Transverse colon (tissue), 4 donors: ENCODE measurements at regions of chr1 and their contacts with region 1.

Region 1: GRCh38 chr1:181314959-181315358 is 168.4 kb upstream of the CACNA1E start:
- DNase-seq: no peak
- H3K4me3 ChIP-seq: no peak overlapping the region
- H3K27ac ChIP-seq: no peak overlapping the region
- H3K4me1 ChIP-seq: peaks cover 0 to 6% (median 0%) of the 10 kb centered on the region in 4 donors
- H3K27me3 ChIP-seq: peaks cover 70% of the 10 kb centered on the region
- CTCF ChIP-seq: no peak
- EP300 ChIP-seq: no peak
- POLR2A ChIP-seq: no peak

Region 2: DNA sequence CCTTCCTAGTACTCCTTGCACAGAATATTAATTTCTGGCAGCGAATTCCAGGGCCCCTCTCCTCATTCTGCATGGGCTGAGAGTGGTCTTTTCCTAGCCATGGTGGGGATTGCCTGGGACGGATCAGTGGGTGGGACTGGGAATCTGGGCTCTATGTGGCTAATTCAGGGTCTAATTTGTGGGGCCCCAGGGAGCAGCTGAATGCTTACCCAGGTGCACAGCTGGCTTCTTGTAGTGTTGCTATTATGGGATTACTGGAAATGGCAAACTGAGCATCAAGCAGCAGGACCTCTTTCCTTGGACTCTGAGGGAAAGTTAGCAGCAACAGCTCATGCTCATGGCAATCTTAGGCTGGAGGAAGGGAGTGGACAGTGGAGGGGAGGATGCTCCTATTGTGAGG is 18.8 kb before region 1 on chr1:
- in situ Hi-C with region 1: no loop called
- intact Hi-C with region 1: loop called (anchors 1 kb)
- DNase-seq: no peak
- H3K4me3 ChIP-seq: no peak overlapping the region
- H3K27ac ChIP-seq: no peak overlapping the region
- H3K4me1 ChIP-seq: no peaks in the 10 kb centered on the region
- H3K27me3 ChIP-seq: no peaks in the 10 kb centered on the region
- CTCF ChIP-seq: no peak
- EP300 ChIP-seq: no peak
- POLR2A ChIP-seq: no peak